CD14-positive monocyte (primary cell): ENCODE measurements at regions of chr14 and their contacts with region 1.

Region 1: GRCh38 chr14:22918804-22919600 is at the start of gene RBM23:
- DNase-seq: peak; percentile 100
- H3K4me3 ChIP-seq: peak within 1 kb of the TSS; percentile 81 to 86 (median 85)
- H3K4me3 Mint-ChIP-seq: peak within 1 kb of the TSS; percentile 87 to 95
- H3K27ac ChIP-seq: peak within 1 kb of the TSS; percentile 87 to 99
- H3K27ac Mint-ChIP-seq: peak within 1 kb of the TSS; percentile 100
- H3K4me1 ChIP-seq: peaks cover 50 to 51% of the 10 kb centered on the region in 2 donors
- H3K4me1 Mint-ChIP-seq: peaks cover 49% of the 10 kb centered on the region
- H3K27me3 ChIP-seq: no peaks in the 10 kb centered on the region
- H3K27me3 Mint-ChIP-seq: peaks cover 0 to 3% (median 0%) of the 10 kb centered on the region in 3 donors
- CTCF ChIP-seq: no peak
- polyA plus RNA-seq, gene RBM23: 76.7 to 89.7 (median 85.7) TPM

Region 2: DNA sequence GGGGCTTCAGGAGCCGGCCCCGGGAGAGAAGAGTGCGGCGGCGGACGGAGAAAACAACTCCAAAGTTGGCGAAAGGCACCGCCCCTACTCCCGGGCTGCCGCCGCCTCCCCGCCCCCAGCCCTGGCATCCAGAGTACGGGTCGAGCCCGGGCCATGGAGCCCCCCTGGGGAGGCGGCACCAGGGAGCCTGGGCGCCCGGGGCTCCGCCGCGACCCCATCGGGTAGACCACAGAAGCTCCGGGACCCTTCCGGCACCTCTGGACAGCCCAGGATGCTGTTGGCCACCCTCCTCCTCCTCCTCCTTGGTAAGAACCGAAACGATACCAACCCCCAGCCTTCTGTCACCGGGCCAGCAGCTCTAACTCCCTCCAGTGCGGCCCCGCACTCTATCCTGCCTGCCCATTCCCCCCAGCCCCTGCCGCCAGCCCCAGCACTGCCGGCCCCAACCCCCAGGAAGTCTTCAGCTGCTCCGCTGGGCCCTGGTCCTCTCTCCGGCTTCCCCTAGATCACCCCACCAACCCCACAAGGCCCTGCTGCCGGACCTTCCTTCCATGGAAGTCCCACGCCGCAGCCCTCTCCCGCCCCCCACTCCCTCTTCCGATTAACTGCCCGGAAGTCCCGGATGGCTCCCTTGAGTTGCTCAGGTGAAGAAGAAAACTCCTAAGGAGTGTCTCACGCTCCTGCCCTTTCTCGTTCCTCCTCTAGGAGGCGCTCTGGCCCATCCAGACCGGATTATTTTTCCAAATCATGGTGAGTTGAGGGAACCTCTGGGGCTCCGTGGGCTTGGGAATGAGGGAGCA is 46.8 kb before region 1 on chr14:
- intact Hi-C with region 1: loop called in 1 of 2 experiments (anchors 5 kb)
- DNase-seq: peak; percentile 49 to 71 (median 68)
- H3K4me3 ChIP-seq: peak overlapping the region; percentile 76 to 93 (median 90)
- H3K4me3 Mint-ChIP-seq: peak overlapping the region; percentile 83 to 92
- H3K27ac ChIP-seq: peak overlapping the region; percentile 78 to 91
- H3K27ac Mint-ChIP-seq: peak overlapping the region in 6 of 7 donors; percentile 50 to 97 (median 90)
- H3K4me1 ChIP-seq: peaks cover 19 to 25% of the 10 kb centered on the region in 2 donors
- H3K4me1 Mint-ChIP-seq: peaks cover 23% of the 10 kb centered on the region
- H3K27me3 ChIP-seq: no peaks in the 10 kb centered on the region
- H3K27me3 Mint-ChIP-seq: peaks cover 0 to 2% (median 0%) of the 10 kb centered on the region in 3 donors
- CTCF ChIP-seq: peak; percentile 90

Region 3: GRCh38 chr14:22882529-22883172 is 36.4 kb before region 1 on chr14:
- intact Hi-C with region 1: no loop called
- DNase-seq: peak in 1 of 3 donors; percentile 19
- H3K4me3 ChIP-seq: no peak overlapping the region
- H3K4me3 Mint-ChIP-seq: peak overlapping the region in 1 of 2 donors; percentile 39
- H3K27ac ChIP-seq: no peak overlapping the region
- H3K27ac Mint-ChIP-seq: no peak overlapping the region
- H3K4me1 ChIP-seq: peaks cover 12 to 21% of the 10 kb centered on the region in 2 donors
- H3K4me1 Mint-ChIP-seq: peaks cover 43% of the 10 kb centered on the region
- H3K27me3 ChIP-seq: peaks cover 0 to 31% of the 10 kb centered on the region in 2 donors
- H3K27me3 Mint-ChIP-seq: peaks cover 31 to 47% (median 33%) of the 10 kb centered on the region in 3 donors
- CTCF ChIP-seq: no peak

Region 4: DNA sequence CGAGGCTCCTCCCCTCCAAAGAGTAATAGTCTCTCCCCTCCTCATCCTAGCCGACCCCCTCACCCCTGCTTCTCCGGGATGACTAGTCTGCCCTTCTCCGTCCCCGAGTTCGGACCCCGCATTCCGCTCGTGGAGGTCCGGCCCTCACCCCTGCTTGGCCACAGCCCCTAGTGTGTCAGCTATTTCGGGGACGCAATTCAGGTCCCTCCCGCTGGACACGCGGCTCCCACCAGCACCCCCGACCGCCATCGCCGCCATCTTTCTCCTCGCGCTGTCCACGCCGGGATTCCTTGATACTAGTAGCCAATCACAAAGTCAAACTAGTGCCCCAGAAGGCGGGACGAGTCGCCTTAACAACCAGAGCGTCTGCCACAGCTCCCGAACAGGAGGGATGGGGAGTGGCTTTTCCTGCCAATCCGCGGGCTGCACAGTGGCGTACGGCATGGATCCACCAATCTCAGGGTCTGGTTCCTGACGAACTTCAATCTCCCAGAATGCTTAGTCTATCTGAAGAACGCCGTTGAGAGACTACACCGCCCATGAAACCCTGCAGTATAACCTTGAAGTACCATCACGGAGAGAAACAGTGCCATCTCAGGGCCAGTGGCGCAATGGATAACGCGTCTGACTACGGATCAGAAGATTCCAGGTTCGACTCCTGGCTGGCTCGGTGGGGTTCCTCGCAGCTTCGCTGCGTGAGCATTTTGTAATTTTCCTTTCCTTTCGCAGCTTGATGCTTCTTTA is 10.3 kb after region 1 on chr14 and contains the start of gene PRMT5:
- intact Hi-C with region 1: loop called in 1 of 2 experiments (anchors 1 kb)
- DNase-seq: peak; percentile 99 to 100 (median 99)
- H3K4me3 ChIP-seq: peak within 1 kb of the TSS; percentile 90 to 98 (median 96)
- H3K4me3 Mint-ChIP-seq: no peak within 1 kb of the TSS
- H3K27ac ChIP-seq: peak within 1 kb of the TSS; percentile 65 to 86
- H3K27ac Mint-ChIP-seq: peak within 1 kb of the TSS in 2 of 7 donors; percentile 28 to 85
- H3K4me1 ChIP-seq: peaks cover 19 to 34% of the 10 kb centered on the region in 2 donors
- H3K4me1 Mint-ChIP-seq: peaks cover 8% of the 10 kb centered on the region
- H3K27me3 ChIP-seq: no peaks in the 10 kb centered on the region
- H3K27me3 Mint-ChIP-seq: no peaks in the 10 kb centered on the region
- CTCF ChIP-seq: no peak
- polyA plus RNA-seq, gene PRMT5: 38.7 to 44.4 (median 44.1) TPM

Region 5: DNA sequence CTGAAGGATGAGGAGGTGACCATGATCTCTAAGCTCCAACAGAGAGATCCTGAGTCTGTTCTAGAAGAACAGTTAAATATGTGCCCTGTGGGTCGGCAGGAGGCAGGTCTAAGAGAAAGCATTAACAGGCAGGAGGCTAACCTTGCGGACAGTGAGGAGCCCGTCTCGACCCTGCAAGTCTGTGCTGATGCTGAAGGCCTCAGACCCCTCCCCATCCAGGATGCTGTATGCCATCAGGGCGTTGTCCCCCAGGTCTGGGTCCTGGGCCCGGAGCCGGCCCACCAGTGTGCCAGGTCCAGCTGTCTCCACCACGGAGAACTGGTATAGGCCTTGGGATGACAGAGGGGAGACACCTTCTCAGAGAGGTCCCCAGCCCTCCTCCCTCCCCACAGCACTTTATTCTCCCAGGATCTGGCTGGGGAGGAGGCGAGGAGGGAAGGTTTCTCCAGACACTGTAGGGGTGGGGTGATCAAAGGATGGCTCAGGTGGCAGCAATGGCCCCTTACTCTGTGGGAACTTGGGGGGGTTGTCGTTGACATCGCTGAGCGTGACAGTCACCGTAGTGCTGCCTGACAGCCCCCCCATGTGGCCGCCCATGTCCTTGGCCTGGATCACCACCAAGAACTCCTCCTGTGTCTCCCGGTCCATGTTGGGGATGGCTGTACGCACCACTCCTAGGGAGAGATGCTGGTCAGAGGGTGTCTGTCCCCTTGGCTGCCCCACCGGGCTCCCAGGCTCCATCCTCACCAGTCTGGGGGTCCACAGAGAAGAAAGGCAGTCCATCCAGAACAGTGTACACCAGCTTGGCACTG is 135.2 kb after region 1 on chr14:
- intact Hi-C with region 1: no loop called
- DNase-seq: no peak
- H3K4me3 ChIP-seq: no peak overlapping the region
- H3K4me3 Mint-ChIP-seq: no peak overlapping the region
- H3K27ac ChIP-seq: no peak overlapping the region
- H3K27ac Mint-ChIP-seq: no peak overlapping the region
- H3K4me1 ChIP-seq: peaks cover 23 to 32% of the 10 kb centered on the region in 2 donors
- H3K4me1 Mint-ChIP-seq: peaks cover 29% of the 10 kb centered on the region
- H3K27me3 ChIP-seq: peaks cover 4 to 10% of the 10 kb centered on the region in 2 donors
- H3K27me3 Mint-ChIP-seq: peaks cover 10 to 15% (median 12%) of the 10 kb centered on the region in 3 donors
- CTCF ChIP-seq: no peak